HepG2 (cell line): ENCODE measurements at regions of chr22 and their contacts with region 1.

Region 1: GRCh38 chr22:30763815-30764686 is 69.4 kb downstream of the OSBP2 start:
- DNase-seq: peak; percentile 70
- ATAC-seq: peak; percentile 83
- H3K4me3 ChIP-seq: no peak overlapping the region
- H3K27ac ChIP-seq: no peak overlapping the region
- H3K4me1 ChIP-seq: peaks cover 9% of the 10 kb centered on the region
- H3K27me3 ChIP-seq: no peaks in the 10 kb centered on the region
- CTCF ChIP-seq: peak; percentile 82
- EP300 ChIP-seq: no peak
- POLR2A ChIP-seq: no peak
- RAD21 ChIP-seq: peak; percentile 81

Region 2: GRCh38 chr22:30806391-30806861 is 42.4 kb after region 1 on chr22:
- CTCF ChIA-PET with region 1: no interaction called
- POLR2A ChIA-PET with region 1: no interaction called
- in situ Hi-C with region 1: no loop called
- intact Hi-C with region 1: no loop called
- DNase-seq: peak; percentile 30
- ATAC-seq: no peak
- H3K4me3 ChIP-seq: no peak overlapping the region
- H3K27ac ChIP-seq: no peak overlapping the region
- H3K4me1 ChIP-seq: no peaks in the 10 kb centered on the region
- H3K27me3 ChIP-seq: peaks cover 0 to 48% of the 10 kb centered on the region in 2 experiments; a peak in 4 of 5 replicates
- CTCF ChIP-seq: no peak
- EP300 ChIP-seq: no peak
- POLR2A ChIP-seq: no peak
- RAD21 ChIP-seq: no peak

Region 3: GRCh38 chr22:30881361-30882183 is 117.5 kb after region 1 on chr22:
- CTCF ChIA-PET with region 1: no interaction called
- POLR2A ChIA-PET with region 1: no interaction called
- in situ Hi-C with region 1: no loop called
- intact Hi-C with region 1: loop called (anchors 5 kb)
- DNase-seq: peak; percentile 46
- ATAC-seq: peak; percentile 84
- H3K4me3 ChIP-seq: peak overlapping the region; percentile 32 to 64 (median 42); a peak in 5 of 6 replicates
- H3K27ac ChIP-seq: peak overlapping the region; percentile 67
- H3K4me1 ChIP-seq: peaks cover 58% of the 10 kb centered on the region
- H3K27me3 ChIP-seq: peaks cover 0 to 9% of the 10 kb centered on the region in 2 experiments; a peak in 3 of 5 replicates
- CTCF ChIP-seq: no peak
- EP300 ChIP-seq: peak; percentile 10 to 50; a peak in 2 of 4 replicates
- POLR2A ChIP-seq: peak; percentile 57 to 62; a peak in 3 of 4 replicates
- RAD21 ChIP-seq: no peak

Region 4: GRCh38 chr22:30890686-30891442 is 126.8 kb after region 1 on chr22:
- CTCF ChIA-PET with region 1: interaction called, 20 read pairs
- POLR2A ChIA-PET with region 1: no interaction called
- in situ Hi-C with region 1: loop called (anchors 10 kb)
- intact Hi-C with region 1: loop called (anchors 1 kb)
- DNase-seq: no peak
- ATAC-seq: peak; percentile 86
- H3K4me3 ChIP-seq: no peak overlapping the region
- H3K27ac ChIP-seq: no peak overlapping the region
- H3K4me1 ChIP-seq: peaks cover 9% of the 10 kb centered on the region
- H3K27me3 ChIP-seq: no peaks in the 10 kb centered on the region
- CTCF ChIP-seq: peak; percentile 92
- EP300 ChIP-seq: no peak
- POLR2A ChIP-seq: no peak
- RAD21 ChIP-seq: peak; percentile 83

Region 5: GRCh38 chr22:30920407-30920806 is 156.4 kb after region 1 on chr22:
- CTCF ChIA-PET with region 1: interaction called, 37 read pairs
- POLR2A ChIA-PET with region 1: no interaction called
- in situ Hi-C with region 1: loop called (anchors 5 kb)
- intact Hi-C with region 1: loop called (anchors 1 kb)
- DNase-seq: peak; percentile 32
- ATAC-seq: peak; percentile 79
- H3K4me3 ChIP-seq: no peak overlapping the region
- H3K27ac ChIP-seq: no peak overlapping the region
- H3K4me1 ChIP-seq: 0 out of 2 replicates have a peak, but pooled peaks cover 5% of the 10 kb centered on the region
- H3K27me3 ChIP-seq: no peaks in the 10 kb centered on the region
- CTCF ChIP-seq: peak; percentile 82
- EP300 ChIP-seq: no peak
- POLR2A ChIP-seq: no peak
- RAD21 ChIP-seq: peak; percentile 36; the same call in 1 of the 2 replicates